ENCODE measurements at regions of chr3 and their contacts with region 1.

Region 1: GRCh38 chr3:138186803-138187295 is 252 bp upstream of the ARMC8 start:
- DNase-seq: peak; percentile 87
- H3K4me3 Mint-ChIP-seq: peak overlapping the region; percentile 90
- H3K27ac Mint-ChIP-seq: peak overlapping the region; percentile 95
- H3K4me1 Mint-ChIP-seq: peaks cover 34% of the 10 kb centered on the region
- H3K27me3 Mint-ChIP-seq: no peaks in the 10 kb centered on the region
- CTCF ChIP-seq: no peak

Region 2: GRCh38 chr3:137988152-137988551 is 198.7 kb before region 1 on chr3:
- CTCF ChIA-PET with region 1: no interaction called
- POLR2A ChIA-PET with region 1: no interaction called
- intact Hi-C with region 1: no loop called
- DNase-seq: no peak
- H3K4me3 Mint-ChIP-seq: no peak overlapping the region
- H3K27ac Mint-ChIP-seq: no peak overlapping the region
- H3K4me1 Mint-ChIP-seq: no peaks in the 10 kb centered on the region
- H3K27me3 Mint-ChIP-seq: peaks cover 6% of the 10 kb centered on the region
- CTCF ChIP-seq: no peak

Region 3: GRCh38 chr3:138174421-138175122 is 12.3 kb before region 1 on chr3 and contains the start of gene DBR1:
- CTCF ChIA-PET with region 1: interaction called, 5 read pairs
- POLR2A ChIA-PET with region 1: interaction called, 81 read pairs
- intact Hi-C with region 1: no loop called
- DNase-seq: peak; percentile 90
- H3K4me3 Mint-ChIP-seq: peak within 1 kb of the TSS; percentile 89
- H3K27ac Mint-ChIP-seq: peak within 1 kb of the TSS; percentile 93
- H3K4me1 Mint-ChIP-seq: peaks cover 12% of the 10 kb centered on the region
- H3K27me3 Mint-ChIP-seq: peaks cover 11% of the 10 kb centered on the region
- CTCF ChIP-seq: no peak
- total RNA-seq, gene DBR1: 12.4 and 13.3 TPM in 2 replicates

Measured in MCF 10A (cell line).